ENCODE measurements at regions of chr2 and their contacts with region 1.

Region 1: GRCh38 chr2:105858868-105859693 is 114.4 kb downstream of the NCK2 start:
- DNase-seq: no peak
- H3K4me3 Mint-ChIP-seq: peak overlapping the region; percentile 46
- H3K27ac Mint-ChIP-seq: peak overlapping the region; percentile 86
- H3K4me1 Mint-ChIP-seq: peaks cover 79% of the 10 kb centered on the region
- H3K27me3 Mint-ChIP-seq: no peaks in the 10 kb centered on the region

Region 2: GRCh38 chr2:105797298-105797819 is 61.7 kb before region 1 on chr2:
- intact Hi-C with region 1: loop called (anchors 2 kb)
- DNase-seq: peak; percentile 48
- H3K4me3 Mint-ChIP-seq: peak overlapping the region; percentile 53
- H3K27ac Mint-ChIP-seq: peak overlapping the region; percentile 91
- H3K4me1 Mint-ChIP-seq: peaks cover 87% of the 10 kb centered on the region
- H3K27me3 Mint-ChIP-seq: no peaks in the 10 kb centered on the region

Region 3: DNA sequence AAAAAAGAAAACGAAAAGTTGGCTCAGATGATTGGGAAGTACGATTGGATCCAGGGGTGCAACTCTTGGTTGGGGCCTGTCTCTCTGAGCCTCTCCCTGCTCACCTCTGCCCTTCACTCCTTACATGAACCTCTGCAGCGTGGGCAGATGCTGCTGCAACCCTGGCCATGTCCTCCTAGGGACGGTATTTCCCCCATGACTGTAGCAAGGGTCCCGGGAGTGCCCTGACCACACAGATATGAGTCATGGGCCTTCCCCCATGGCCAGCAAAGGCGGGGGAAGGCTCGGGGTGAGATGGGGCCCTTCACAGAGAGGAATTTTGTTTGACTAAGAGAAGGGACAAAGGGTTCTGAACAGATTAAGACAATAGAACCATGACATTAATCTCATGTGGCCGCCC is 14.6 kb after region 1 on chr2:
- intact Hi-C with region 1: loop called (anchors 1 kb)
- DNase-seq: peak; percentile 18
- H3K4me3 Mint-ChIP-seq: peak overlapping the region; percentile 34
- H3K27ac Mint-ChIP-seq: peak overlapping the region; percentile 91
- H3K4me1 Mint-ChIP-seq: peaks cover 73% of the 10 kb centered on the region
- H3K27me3 Mint-ChIP-seq: no peaks in the 10 kb centered on the region

Region 4: GRCh38 chr2:105904938-105905337 is 45.9 kb after region 1 on chr2:
- intact Hi-C with region 1: loop called (anchors 5 kb)
- DNase-seq: no peak
- H3K4me3 Mint-ChIP-seq: no peak overlapping the region
- H3K27ac Mint-ChIP-seq: no peak overlapping the region
- H3K4me1 Mint-ChIP-seq: peaks cover 44% of the 10 kb centered on the region
- H3K27me3 Mint-ChIP-seq: no peaks in the 10 kb centered on the region